Aorta (tissue), 5 donors: ENCODE measurements at regions of chr12 and their contacts with region 1.

Region 1: DNA sequence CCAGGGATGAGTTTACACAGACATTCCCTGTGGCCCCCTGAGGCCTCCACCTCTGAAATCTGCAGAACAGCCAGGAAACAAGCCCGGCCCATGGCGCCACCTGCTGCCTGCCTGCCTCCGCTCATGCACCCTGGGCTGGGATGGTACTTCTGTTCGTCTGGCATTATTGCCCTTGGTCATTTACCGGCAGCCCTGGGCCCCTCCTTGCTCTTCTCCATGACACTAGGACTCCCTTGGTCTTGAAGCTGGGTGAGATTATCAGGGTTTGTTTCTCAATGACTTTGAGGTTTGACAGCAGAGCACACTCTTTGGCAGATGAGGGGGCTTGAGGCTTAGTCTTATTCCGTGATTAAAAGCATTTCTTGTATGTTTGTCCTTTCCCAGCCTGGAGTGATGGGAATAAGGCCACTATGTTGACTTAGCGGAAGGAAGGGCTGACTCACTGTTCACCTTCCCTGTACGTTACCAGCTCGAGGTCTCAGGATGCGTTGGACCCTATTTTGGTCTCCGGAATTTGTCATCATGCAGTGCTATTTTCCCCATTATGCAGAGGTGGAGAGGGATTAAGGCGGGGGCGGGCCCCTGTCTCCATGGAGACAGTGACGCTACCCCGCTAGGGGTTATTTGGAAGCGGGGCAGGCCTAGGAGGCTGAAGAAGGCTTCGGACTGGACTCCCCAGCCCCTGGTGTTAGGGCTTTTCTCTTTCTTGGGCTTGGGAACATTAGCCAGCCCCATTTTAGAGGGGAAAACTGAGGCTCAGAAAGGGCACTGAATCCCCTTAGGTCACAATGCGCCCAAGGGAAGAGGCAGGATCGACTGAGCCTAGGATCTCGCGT is 706 bp upstream of the PEX5 start:
- DNase-seq: peak; percentile 77 to 88
- ATAC-seq: peak; percentile 87
- H3K4me3 ChIP-seq: peak overlapping the region; percentile 90 to 92
- H3K27ac ChIP-seq: peak overlapping the region; percentile 62 to 88
- H3K4me1 ChIP-seq: no peaks in the 10 kb centered on the region
- H3K27me3 ChIP-seq: no peaks in the 10 kb centered on the region

Region 2: DNA sequence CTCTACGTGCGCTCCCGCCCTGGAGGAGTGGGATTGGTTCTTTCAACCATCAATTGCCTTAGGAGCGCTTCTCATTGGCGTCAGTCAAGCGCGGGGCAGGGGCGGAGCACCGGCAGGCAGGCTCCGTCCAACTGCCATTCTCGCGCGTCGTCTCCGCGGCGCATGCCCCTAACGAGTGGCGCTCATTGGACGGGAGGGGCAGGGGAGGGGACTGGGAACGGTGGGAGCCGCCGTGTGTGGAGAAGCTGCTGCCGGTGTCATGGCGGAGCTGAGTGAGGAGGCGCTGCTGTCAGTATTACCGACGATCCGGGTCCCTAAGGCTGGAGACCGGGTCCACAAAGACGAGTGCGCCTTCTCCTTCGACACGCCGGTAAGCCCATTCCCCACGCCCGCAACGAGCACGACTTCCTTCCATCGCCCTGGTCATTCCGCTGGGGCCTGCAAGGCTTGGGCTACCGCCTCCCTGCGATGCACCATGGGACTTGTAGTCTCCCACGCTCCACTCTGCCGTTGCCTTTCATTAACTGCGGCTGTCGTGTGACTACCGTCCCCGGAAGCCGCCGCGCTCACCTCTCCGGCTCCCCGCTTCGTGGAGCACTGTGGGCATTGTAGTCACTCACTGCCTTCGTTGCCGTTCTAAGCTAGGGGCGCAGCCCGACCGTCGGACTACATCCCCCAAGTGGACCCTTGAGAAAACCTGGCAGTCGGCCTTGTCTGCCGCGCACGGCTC is 336.7 kb before region 1 on chr12 and contains the start of gene USP5:
- intact Hi-C with region 1: no loop called
- DNase-seq: peak; percentile 99 to 100
- ATAC-seq: peak; percentile 96
- H3K4me3 ChIP-seq: peak within 1 kb of the TSS; percentile 58 to 60
- H3K27ac ChIP-seq: peak within 1 kb of the TSS; percentile 58 to 78
- H3K4me1 ChIP-seq: no peaks in the 10 kb centered on the region
- H3K27me3 ChIP-seq: no peaks in the 10 kb centered on the region
- total RNA-seq, gene USP5: 59.5 to 64.6 TPM

Region 3: GRCh38 chr12:7142056-7142644 is 46.6 kb before region 1 on chr12:
- intact Hi-C with region 1: loop called in 1 of 2 experiments (anchors 1 kb)
- DNase-seq: peak in 1 of 2 donors; percentile 61
- ATAC-seq: peak; percentile 60
- H3K4me3 ChIP-seq: no peak overlapping the region
- H3K27ac ChIP-seq: no peak overlapping the region
- H3K4me1 ChIP-seq: no peaks in the 10 kb centered on the region
- H3K27me3 ChIP-seq: no peaks in the 10 kb centered on the region